BJ (cell line): ENCODE measurements at regions of chr1 and their contacts with region 1.

Region 1: GRCh38 chr1:157963713-157964112 is 29.7 kb upstream of the KIRREL1 start:
- DNase-seq: no peak
- H3K4me3 ChIP-seq: no peak overlapping the region
- H3K27me3 ChIP-seq: peaks cover 6% of the 10 kb centered on the region
- CTCF ChIP-seq: peak; percentile 88

Region 2: GRCh38 chr1:158019171-158019868 is 55.6 kb after region 1 on chr1:
- CTCF ChIA-PET with region 1: interaction called, 3 read pairs
- POLR2A ChIA-PET with region 1: interaction called, 16 read pairs
- DNase-seq: peak; percentile 86
- H3K4me3 ChIP-seq: 0 out of 2 replicates have a peak overlapping the region, but pooled peaks have one; percentile 1
- H3K27me3 ChIP-seq: no peaks in the 10 kb centered on the region
- CTCF ChIP-seq: no peak

Region 3: GRCh38 chr1:158124999-158125398 is 161.3 kb after region 1 on chr1:
- CTCF ChIA-PET with region 1: interaction called, 627 read pairs
- POLR2A ChIA-PET with region 1: no interaction called
- DNase-seq: peak; percentile 73
- H3K4me3 ChIP-seq: no peak overlapping the region
- H3K27me3 ChIP-seq: peaks cover 7% of the 10 kb centered on the region
- CTCF ChIP-seq: peak; percentile 90